Testis (tissue), 5 donors: ENCODE measurements at regions of chr1 and their contacts with region 1.

Region 1: GRCh38 chr1:35192853-35193664 is at the start of gene SFPQ:
- DNase-seq: peak; percentile 99
- H3K4me3 ChIP-seq: peak within 1 kb of the TSS; percentile 100
- H3K27ac ChIP-seq: peak within 1 kb of the TSS; percentile 99 to 100
- H3K4me1 ChIP-seq: peaks cover 31% of the 10 kb centered on the region
- H3K27me3 ChIP-seq: no peaks in the 10 kb centered on the region
- CTCF ChIP-seq: no peak
- POLR2A ChIP-seq: peak; percentile 75
- total RNA-seq, gene SFPQ: 417 to 436 TPM

Region 2: GRCh38 chr1:35030756-35031446 is 162.2 kb before region 1 on chr1:
- intact Hi-C with region 1: loop called (anchors 5 kb)
- DNase-seq: peak; percentile 51
- H3K4me3 ChIP-seq: peak overlapping the region; percentile 72 to 84
- H3K27ac ChIP-seq: peak overlapping the region; percentile 90 to 96
- H3K4me1 ChIP-seq: peaks cover 10% of the 10 kb centered on the region
- H3K27me3 ChIP-seq: no peaks in the 10 kb centered on the region
- CTCF ChIP-seq: no peak
- POLR2A ChIP-seq: no peak

Region 3: GRCh38 chr1:35350872-35351271 is 157.8 kb after region 1 on chr1:
- intact Hi-C with region 1: no loop called
- DNase-seq: no peak
- H3K4me3 ChIP-seq: no peak overlapping the region
- H3K27ac ChIP-seq: no peak overlapping the region
- H3K4me1 ChIP-seq: no peaks in the 10 kb centered on the region
- H3K27me3 ChIP-seq: no peaks in the 10 kb centered on the region
- CTCF ChIP-seq: no peak
- POLR2A ChIP-seq: no peak